ENCODE measurements at regions of chr21 and their contacts with region 1.

Region 1: DNA sequence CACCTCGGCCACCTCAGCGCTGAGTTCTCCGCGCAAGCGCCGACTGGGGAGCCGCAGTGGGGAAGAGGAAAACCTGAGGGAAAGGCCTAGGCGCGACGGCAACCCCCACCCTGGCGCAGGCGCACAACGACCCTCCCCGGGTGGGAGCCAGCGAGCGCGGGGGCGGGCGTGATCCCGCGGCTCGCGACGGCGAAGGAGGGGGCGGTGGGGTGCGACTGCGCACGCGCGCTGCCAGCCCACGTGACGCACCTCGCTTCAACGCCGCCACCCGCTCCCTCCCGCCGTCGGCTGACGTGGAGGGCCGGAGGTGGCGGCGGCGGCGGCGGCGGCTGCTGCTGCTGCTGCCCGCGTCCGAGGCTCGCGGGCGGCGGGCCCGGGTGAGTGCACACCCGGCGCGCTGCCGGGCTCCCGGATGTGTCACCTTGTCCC is at the starts of genes PIGP and TTC3:
- DNase-seq: peak; percentile 94 to 95 (median 94)
- H3K4me3 ChIP-seq: peak within 1 kb of the TSS; percentile 85 to 91 (median 89)
- H3K4me3 Mint-ChIP-seq: peak within 1 kb of the TSS; percentile 95 to 97
- H3K27ac ChIP-seq: peak within 1 kb of the TSS; percentile 92 to 95
- H3K27ac Mint-ChIP-seq: peak within 1 kb of the TSS; percentile 89 to 95 (median 94)
- H3K4me1 ChIP-seq: peaks cover 18 to 39% of the 10 kb centered on the region in 2 donors
- H3K4me1 Mint-ChIP-seq: peaks cover 30% of the 10 kb centered on the region
- H3K27me3 ChIP-seq: no peaks in the 10 kb centered on the region
- H3K27me3 Mint-ChIP-seq: peaks cover 0 to 4% (median 0%) of the 10 kb centered on the region in 3 donors
- CTCF ChIP-seq: no peak
- polyA plus RNA-seq, gene PIGP: 8.8 to 17.6 (median 10.6) TPM
- polyA plus RNA-seq, gene TTC3: 9.6 to 35.4 (median 17.9) TPM

Region 2: GRCh38 chr21:36989699-36990507 is 83.1 kb before region 1 on chr21:
- intact Hi-C with region 1: loop called in 1 of 2 experiments (anchors 5 kb)
- DNase-seq: peak; percentile 84 to 88 (median 86)
- H3K4me3 ChIP-seq: peak overlapping the region; percentile 27 to 68 (median 31)
- H3K4me3 Mint-ChIP-seq: peak overlapping the region; percentile 75 to 83
- H3K27ac ChIP-seq: peak overlapping the region; percentile 49 to 73
- H3K27ac Mint-ChIP-seq: peak overlapping the region; percentile 33 to 85 (median 76)
- H3K4me1 ChIP-seq: peaks cover 4 to 14% of the 10 kb centered on the region in 2 donors
- H3K4me1 Mint-ChIP-seq: peaks cover 7% of the 10 kb centered on the region
- H3K27me3 ChIP-seq: peaks cover 4 to 22% of the 10 kb centered on the region in 2 donors
- H3K27me3 Mint-ChIP-seq: peaks cover 12 to 32% (median 22%) of the 10 kb centered on the region in 3 donors
- CTCF ChIP-seq: peak; percentile 93

Region 3: DNA sequence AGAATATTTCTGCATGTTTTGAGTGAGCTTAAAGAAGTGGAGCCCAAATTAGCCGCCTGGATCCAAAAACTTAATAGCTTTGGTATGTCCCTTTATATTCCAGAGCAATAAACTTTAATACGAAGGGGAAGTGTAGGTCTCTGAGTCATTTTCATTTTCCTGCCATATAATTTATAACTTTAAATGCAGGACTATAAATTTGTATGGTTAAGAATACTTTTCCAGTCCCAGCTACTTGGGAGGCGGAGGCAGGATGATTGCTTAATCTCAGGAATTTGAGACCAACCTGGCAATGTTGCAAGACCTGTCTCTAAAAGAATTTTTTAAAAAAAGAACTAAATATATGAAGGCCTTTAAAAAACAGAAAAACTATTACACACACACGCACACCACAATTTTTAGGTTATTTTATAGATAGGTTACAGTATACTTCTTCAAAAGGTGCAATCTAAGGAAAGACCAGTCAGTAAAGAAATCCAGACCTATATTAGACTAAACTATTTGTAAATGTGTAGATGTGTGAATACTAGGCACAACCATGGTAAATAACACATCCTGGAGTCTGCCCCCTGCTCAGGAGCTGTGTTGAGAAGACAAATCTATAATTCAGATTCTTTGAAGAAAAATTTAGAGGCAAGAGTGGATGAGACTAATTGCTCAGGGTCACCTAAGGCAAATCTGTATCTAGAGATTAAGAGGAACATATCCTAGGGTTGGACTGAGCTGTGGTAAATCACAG is 80.4 kb after region 1 on chr21:
- intact Hi-C with region 1: no loop called
- DNase-seq: no peak
- H3K4me3 ChIP-seq: no peak overlapping the region
- H3K4me3 Mint-ChIP-seq: no peak overlapping the region
- H3K27ac ChIP-seq: no peak overlapping the region
- H3K27ac Mint-ChIP-seq: no peak overlapping the region
- H3K4me1 ChIP-seq: no peaks in the 10 kb centered on the region
- H3K4me1 Mint-ChIP-seq: no peaks in the 10 kb centered on the region
- H3K27me3 ChIP-seq: no peaks in the 10 kb centered on the region
- H3K27me3 Mint-ChIP-seq: no peaks in the 10 kb centered on the region
- CTCF ChIP-seq: no peak

Measured in CD14-positive monocyte (primary cell).